Ascending aorta (tissue), 2 donors: ENCODE measurements at regions of chr14 and their contacts with region 1.

Region 1: GRCh38 chr14:102509744-102510615 is at the start of gene ANKRD9:
- DNase-seq: peak; percentile 79 to 97
- H3K4me3 ChIP-seq: peak within 1 kb of the TSS; percentile 71 to 87
- H3K27ac ChIP-seq: peak within 1 kb of the TSS; percentile 78 to 92
- H3K4me1 ChIP-seq: peaks cover 8% of the 10 kb centered on the region in 2 donors
- H3K27me3 ChIP-seq: no peaks in the 10 kb centered on the region
- CTCF ChIP-seq: no peak
- total RNA-seq, gene ANKRD9: 118 TPM

Region 2: DNA sequence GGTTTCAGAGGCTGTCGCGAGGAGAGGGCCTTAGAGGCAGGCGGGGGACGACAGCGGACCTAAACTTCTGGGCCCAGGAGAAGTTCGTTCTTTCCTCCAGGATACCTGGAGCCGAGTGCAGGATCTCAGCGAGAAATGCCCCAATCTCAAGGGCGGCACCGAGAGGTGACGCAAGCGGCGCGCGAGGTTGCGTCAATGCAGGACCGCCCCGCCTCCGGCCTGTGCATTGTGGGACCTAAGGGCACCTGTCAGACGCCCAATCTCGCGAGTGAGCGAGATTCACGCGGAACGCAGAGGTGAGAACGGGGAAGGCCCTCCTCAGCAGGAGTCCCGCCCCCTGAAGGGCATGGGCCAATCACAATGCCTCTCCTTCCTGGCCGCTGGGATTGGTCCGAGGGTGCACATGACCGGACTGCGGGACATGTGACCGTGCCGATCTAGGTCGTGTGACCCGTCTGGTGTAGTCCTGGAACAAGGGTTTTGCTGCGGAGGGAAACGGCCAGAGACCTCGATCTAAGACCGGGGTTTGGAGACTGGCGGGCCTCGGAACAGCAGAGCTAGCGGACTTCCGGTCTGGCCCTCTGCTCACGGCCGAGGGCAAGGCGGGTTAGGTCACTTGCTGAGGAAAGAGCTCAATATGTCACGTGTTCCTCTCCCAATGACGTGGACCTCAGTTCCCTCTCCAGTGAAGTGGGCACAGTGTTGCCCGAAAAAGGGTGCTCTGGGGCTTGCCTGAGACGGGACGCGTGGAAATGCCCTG is 561.9 kb before region 1 on chr14:
- intact Hi-C with region 1: loop called (anchors 5 kb)
- DNase-seq: peak; percentile 100
- H3K4me3 ChIP-seq: peak overlapping the region; percentile 71 to 96
- H3K27ac ChIP-seq: peak overlapping the region; percentile 90 to 93
- H3K4me1 ChIP-seq: peaks cover 7 to 10% of the 10 kb centered on the region in 2 donors
- H3K27me3 ChIP-seq: no peaks in the 10 kb centered on the region
- CTCF ChIP-seq: no peak

Region 3: GRCh38 chr14:102086972-102087761 is 422.8 kb before region 1 on chr14 and contains the start of gene HSP90AA1:
- intact Hi-C with region 1: loop called (anchors 5 kb)
- DNase-seq: peak; percentile 75 to 96
- H3K4me3 ChIP-seq: peak within 1 kb of the TSS; percentile 89 to 97
- H3K27ac ChIP-seq: peak within 1 kb of the TSS; percentile 98 to 100
- H3K4me1 ChIP-seq: peaks cover 13 to 37% of the 10 kb centered on the region in 2 donors
- H3K27me3 ChIP-seq: no peaks in the 10 kb centered on the region
- CTCF ChIP-seq: peak in 2 of 3 experiments; percentile 19 to 29
- total RNA-seq, gene HSP90AA1: 120 TPM

Region 4: GRCh38 chr14:102235275-102235897 is 274.6 kb before region 1 on chr14:
- intact Hi-C with region 1: loop called (anchors 10 kb)
- DNase-seq: peak; percentile 24 to 91
- H3K4me3 ChIP-seq: peak overlapping the region in 1 of 2 donors; percentile 53
- H3K27ac ChIP-seq: peak overlapping the region in 1 of 2 donors; percentile 20
- H3K4me1 ChIP-seq: no peaks in the 10 kb centered on the region
- H3K27me3 ChIP-seq: no peaks in the 10 kb centered on the region
- CTCF ChIP-seq: peak; percentile 85 to 86 (median 85)

Region 5: DNA sequence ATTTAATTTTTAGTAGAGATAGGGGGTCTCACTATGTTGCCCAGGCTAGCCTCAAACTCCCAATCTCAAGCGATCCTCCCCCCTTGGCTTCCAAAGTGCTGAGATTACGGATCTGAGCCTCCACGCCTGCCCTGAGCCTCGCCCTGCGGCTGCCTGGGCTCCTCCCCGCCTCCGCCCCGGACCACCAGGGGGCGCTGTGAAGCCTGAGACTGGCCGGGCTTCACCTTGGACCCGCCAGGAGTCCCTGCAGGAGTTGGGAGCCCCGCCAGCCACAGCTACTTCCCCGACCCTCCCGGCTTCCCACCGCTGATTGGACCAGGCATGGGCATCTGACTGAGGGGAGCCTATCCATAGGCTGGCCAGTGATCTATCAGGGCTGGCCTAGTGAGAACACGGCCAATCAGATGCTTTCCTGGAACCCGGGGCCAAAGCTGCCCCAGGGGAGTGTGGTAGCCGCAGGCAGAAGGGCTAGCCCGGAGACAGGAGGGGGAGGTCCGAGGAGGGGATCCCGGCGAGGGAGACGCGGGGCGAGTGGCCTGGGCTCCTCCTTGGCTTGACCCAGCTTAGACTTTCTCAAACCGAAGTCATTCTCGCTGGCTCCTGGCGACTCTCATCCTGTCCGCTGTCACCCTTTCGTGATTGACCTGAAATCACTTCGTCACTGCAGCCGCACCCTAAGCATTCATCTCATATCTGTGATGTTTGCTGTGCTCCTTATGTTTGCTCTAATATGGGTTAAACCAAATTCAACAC is 14.7 kb after region 1 on chr14:
- intact Hi-C with region 1: loop called (anchors 1 kb)
- DNase-seq: peak; percentile 94 to 99
- H3K4me3 ChIP-seq: peak overlapping the region; percentile 63 to 81
- H3K27ac ChIP-seq: peak overlapping the region; percentile 71 to 83
- H3K4me1 ChIP-seq: peaks cover 0 to 5% of the 10 kb centered on the region in 2 donors
- H3K27me3 ChIP-seq: no peaks in the 10 kb centered on the region
- CTCF ChIP-seq: peak; percentile 98 to 99 (median 98)

Region 6: GRCh38 chr14:102591889-102592763 is 82.1 kb after region 1 on chr14 and contains the start of gene RCOR1:
- intact Hi-C with region 1: loop called (anchors 1 kb)
- DNase-seq: peak; percentile 93 to 99
- H3K4me3 ChIP-seq: peak within 1 kb of the TSS; percentile 68 to 83
- H3K27ac ChIP-seq: peak within 1 kb of the TSS; percentile 94 to 98
- H3K4me1 ChIP-seq: peaks cover 8 to 12% of the 10 kb centered on the region in 2 donors
- H3K27me3 ChIP-seq: no peaks in the 10 kb centered on the region
- CTCF ChIP-seq: no peak
- total RNA-seq, gene RCOR1: 4.7 TPM